SK-N-SH (cell line): ENCODE measurements at regions of chr18 and their contacts with region 1.

Region 1: GRCh38 chr18:76982841-76983587 is 149.6 kb downstream of the MBP start:
- DNase-seq: peak; percentile 90
- H3K4me3 ChIP-seq: peak overlapping the region in 1 of 2 experiments; percentile 45; a peak in 2 of 4 replicates
- H3K27ac ChIP-seq: no peak overlapping the region
- H3K4me1 ChIP-seq: peaks cover 0 to 11% of the 10 kb centered on the region in 2 experiments; a peak in 1 of 4 replicates
- H3K27me3 ChIP-seq: no peaks in the 10 kb centered on the region
- CTCF ChIP-seq: peak; percentile 93
- EP300 ChIP-seq: no peak
- RAD21 ChIP-seq: peak; percentile 76

Region 2: GRCh38 chr18:76932026-76932819 is 50.8 kb before region 1 on chr18:
- CTCF ChIA-PET with region 1: interaction called, 14 read pairs
- POLR2A ChIA-PET with region 1: no interaction called
- DNase-seq: no peak
- H3K4me3 ChIP-seq: no peak overlapping the region
- H3K27ac ChIP-seq: no peak overlapping the region
- H3K4me1 ChIP-seq: no peaks in the 10 kb centered on the region
- H3K27me3 ChIP-seq: no peaks in the 10 kb centered on the region
- CTCF ChIP-seq: no peak
- EP300 ChIP-seq: no peak
- RAD21 ChIP-seq: no peak

Region 3: GRCh38 chr18:76943542-76944339 is 39.3 kb before region 1 on chr18:
- CTCF ChIA-PET with region 1: interaction called, 11 read pairs
- POLR2A ChIA-PET with region 1: no interaction called
- DNase-seq: no peak
- H3K4me3 ChIP-seq: no peak overlapping the region
- H3K27ac ChIP-seq: no peak overlapping the region
- H3K4me1 ChIP-seq: no peaks in the 10 kb centered on the region
- H3K27me3 ChIP-seq: no peaks in the 10 kb centered on the region
- CTCF ChIP-seq: no peak
- EP300 ChIP-seq: no peak
- RAD21 ChIP-seq: no peak

Region 4: GRCh38 chr18:76963936-76964335 is 19.1 kb before region 1 on chr18:
- CTCF ChIA-PET with region 1: interaction called, 35 read pairs
- POLR2A ChIA-PET with region 1: no interaction called
- DNase-seq: no peak
- H3K4me3 ChIP-seq: no peak overlapping the region
- H3K27ac ChIP-seq: no peak overlapping the region
- H3K4me1 ChIP-seq: peaks cover 0 to 7% of the 10 kb centered on the region in 2 experiments; a peak in 1 of 4 replicates
- H3K27me3 ChIP-seq: no peaks in the 10 kb centered on the region
- CTCF ChIP-seq: no peak
- EP300 ChIP-seq: no peak
- RAD21 ChIP-seq: no peak